HEK293T (cell line): ENCODE measurements at regions of chr17 and their contacts with region 1.

Region 1: GRCh38 chr17:45073414-45074070 is 12.4 kb downstream of the NMT1 start:
- DNase-seq: no peak

Region 2: GRCh38 chr17:45051060-45051719 is 22.4 kb before region 1 on chr17 and contains the start of gene DCAKD:
- CTCF ChIA-PET with region 1: no interaction called
- POLR2A ChIA-PET with region 1: interaction called, 18 read pairs
- DNase-seq: peak; percentile 89

Region 3: GRCh38 chr17:45060797-45061605 is 12.5 kb before region 1 on chr17 and contains the start of gene NMT1:
- CTCF ChIA-PET with region 1: interaction called, 4 read pairs
- POLR2A ChIA-PET with region 1: interaction called, 18 read pairs
- DNase-seq: peak; percentile 93

Region 4: GRCh38 chr17:45087504-45087975 is 14.0 kb after region 1 on chr17:
- CTCF ChIA-PET with region 1: no interaction called
- POLR2A ChIA-PET with region 1: no interaction called
- DNase-seq: no peak